ENCODE measurements at regions of chr2 and their contacts with region 1.

Region 1: DNA sequence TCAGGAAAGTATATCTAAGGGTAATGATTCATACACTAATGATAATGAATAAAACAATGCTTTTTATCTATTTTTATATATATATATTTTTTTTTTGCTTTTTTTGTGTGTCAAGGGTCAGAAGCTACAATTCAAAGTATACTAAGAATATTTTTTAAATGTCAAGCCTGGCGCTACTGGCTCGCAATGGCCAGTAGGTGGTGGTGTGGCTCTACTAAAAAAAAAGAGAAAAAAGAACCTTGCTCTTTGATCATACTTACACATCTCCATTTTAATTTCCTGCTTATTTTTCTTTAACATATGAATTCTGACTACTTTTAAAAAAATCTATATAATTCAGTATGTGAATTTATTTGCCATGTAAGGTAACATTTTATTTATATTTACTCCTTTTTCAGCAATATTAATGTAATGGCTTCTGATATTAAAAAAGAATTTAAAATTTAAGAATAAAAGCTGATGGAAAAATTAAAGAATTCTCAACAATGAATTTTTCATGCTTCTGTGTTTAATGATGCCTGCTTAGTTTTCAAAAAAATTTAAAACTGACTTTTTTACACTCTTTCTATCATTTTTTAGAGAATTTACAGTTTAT is 232.9 kb downstream of the GULP1 start:
- DNase-seq: peak; percentile 36
- H3K4me3 ChIP-seq: no peak overlapping the region
- H3K27ac ChIP-seq: no peak overlapping the region
- H3K27me3 ChIP-seq: no peaks in the 10 kb centered on the region
- CTCF ChIP-seq: peak; percentile 75

Region 2: GRCh38 chr2:188450732-188451483 is 73.7 kb before region 1 on chr2:
- CTCF ChIA-PET with region 1: no interaction called
- POLR2A ChIA-PET with region 1: no interaction called
- DNase-seq: no peak
- H3K4me3 ChIP-seq: no peak overlapping the region
- H3K27ac ChIP-seq: no peak overlapping the region
- H3K27me3 ChIP-seq: no peaks in the 10 kb centered on the region
- CTCF ChIP-seq: no peak

Region 3: DNA sequence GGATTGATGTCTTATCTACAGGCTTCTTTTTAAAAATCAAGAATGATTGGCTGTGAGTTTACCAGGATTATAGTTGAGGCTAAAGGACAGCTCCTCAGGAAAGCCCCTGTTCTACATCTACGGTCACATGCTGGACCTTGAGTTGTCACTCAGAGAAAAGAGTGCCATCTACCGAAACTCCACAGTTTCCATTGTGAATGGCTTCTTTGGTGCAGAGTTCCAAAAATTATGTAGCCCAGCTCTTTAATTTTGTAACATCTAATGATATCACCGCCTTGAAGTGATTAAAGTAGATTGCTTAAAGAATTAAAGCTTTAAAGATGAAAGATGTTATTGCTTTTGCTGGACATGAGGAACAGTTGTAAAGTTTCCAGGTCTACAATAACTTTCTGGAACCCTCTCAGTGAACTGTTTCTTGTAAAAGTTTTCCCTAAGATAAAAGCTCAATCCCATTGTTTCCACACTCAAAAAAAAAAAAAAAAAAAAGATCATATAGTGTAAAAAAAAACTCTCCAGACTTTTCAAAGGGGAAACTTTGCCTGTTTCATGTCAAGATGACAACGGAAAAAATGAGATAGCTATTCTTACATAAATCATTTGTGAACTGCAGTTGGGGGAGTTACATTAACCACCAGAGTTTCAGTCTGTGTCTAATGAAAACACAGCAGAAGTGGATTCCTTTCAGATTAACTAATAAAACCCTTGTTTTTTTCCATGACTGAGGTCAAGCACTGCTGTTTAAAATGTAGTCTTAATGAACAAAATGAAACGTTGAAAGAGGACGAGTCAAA is 453.9 kb after region 1 on chr2:
- CTCF ChIA-PET with region 1: interaction called, 101 read pairs
- POLR2A ChIA-PET with region 1: interaction called, 3 read pairs
- DNase-seq: no peak
- H3K4me3 ChIP-seq: peak overlapping the region; percentile 69
- H3K27ac ChIP-seq: peak overlapping the region; percentile 63
- H3K27me3 ChIP-seq: no peaks in the 10 kb centered on the region
- CTCF ChIP-seq: peak; percentile 38

Region 4: DNA sequence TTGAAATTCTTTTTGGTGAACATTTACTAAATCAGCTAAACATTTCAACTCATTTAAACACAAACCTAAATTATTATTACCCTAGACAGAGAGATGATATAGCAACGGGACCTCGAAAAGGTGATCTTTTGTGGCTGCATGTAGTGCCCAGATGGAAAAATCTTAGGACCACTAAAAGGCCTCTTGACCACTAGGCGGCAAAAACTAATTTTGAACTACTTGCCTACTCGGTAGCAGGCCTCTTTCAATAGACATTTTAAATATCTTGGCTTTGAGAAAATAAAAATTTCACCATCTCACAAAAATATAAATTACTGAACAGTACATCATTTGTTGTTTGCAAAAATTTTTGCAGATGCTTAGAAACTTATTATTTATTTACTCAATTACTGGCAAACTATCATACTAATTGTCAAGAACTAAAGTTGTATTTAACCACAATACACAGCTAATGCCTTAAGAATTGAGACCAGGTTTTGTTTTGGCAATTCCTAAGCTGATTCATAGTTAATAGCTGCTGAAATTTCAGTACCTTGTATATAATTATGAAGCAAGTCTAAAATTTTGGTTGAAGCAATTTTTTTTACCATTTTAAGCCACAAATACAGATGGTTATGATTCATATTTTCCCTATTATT is 458.9 kb after region 1 on chr2:
- CTCF ChIA-PET with region 1: interaction called, 101 read pairs
- POLR2A ChIA-PET with region 1: no interaction called
- DNase-seq: no peak
- H3K4me3 ChIP-seq: no peak overlapping the region; the same call in 1 of the 2 replicates
- H3K27ac ChIP-seq: no peak overlapping the region
- H3K27me3 ChIP-seq: no peaks in the 10 kb centered on the region
- CTCF ChIP-seq: peak; percentile 60